SK-N-SH (cell line): ENCODE measurements at regions of chr2 and their contacts with region 1.

Region 1: GRCh38 chr2:25197336-25198208 is 29.2 kb upstream of the POMC start:
- DNase-seq: no peak
- H3K4me3 ChIP-seq: no peak overlapping the region
- H3K27ac ChIP-seq: no peak overlapping the region
- H3K4me1 ChIP-seq: peaks cover 0 to 8% of the 10 kb centered on the region in 2 experiments; a peak in 1 of 4 replicates
- H3K27me3 ChIP-seq: no peaks in the 10 kb centered on the region
- CTCF ChIP-seq: no peak
- EP300 ChIP-seq: no peak
- RAD21 ChIP-seq: no peak

Region 2: GRCh38 chr2:25131567-25132298 is 65.8 kb before region 1 on chr2:
- CTCF ChIA-PET with region 1: interaction called, 35 read pairs
- POLR2A ChIA-PET with region 1: no interaction called
- DNase-seq: no peak
- H3K4me3 ChIP-seq: no peak overlapping the region
- H3K27ac ChIP-seq: no peak overlapping the region
- H3K4me1 ChIP-seq: peaks cover 0 to 3% of the 10 kb centered on the region in 2 experiments; a peak in 1 of 4 replicates
- H3K27me3 ChIP-seq: no peaks in the 10 kb centered on the region
- CTCF ChIP-seq: no peak
- EP300 ChIP-seq: no peak
- RAD21 ChIP-seq: no peak

Region 3: GRCh38 chr2:25159949-25160348 is 37.6 kb before region 1 on chr2:
- CTCF ChIA-PET with region 1: interaction called, 121 read pairs
- POLR2A ChIA-PET with region 1: no interaction called
- DNase-seq: peak; percentile 91
- H3K4me3 ChIP-seq: no peak overlapping the region
- H3K27ac ChIP-seq: no peak overlapping the region
- H3K4me1 ChIP-seq: peaks cover 0 to 12% of the 10 kb centered on the region in 2 experiments; a peak in 1 of 4 replicates
- H3K27me3 ChIP-seq: peaks cover 9% of the 10 kb centered on the region; the same call in 1 of the 2 replicates
- CTCF ChIP-seq: peak; percentile 14; the same call in 1 of the 2 replicates
- EP300 ChIP-seq: no peak
- RAD21 ChIP-seq: no peak

Region 4: DNA sequence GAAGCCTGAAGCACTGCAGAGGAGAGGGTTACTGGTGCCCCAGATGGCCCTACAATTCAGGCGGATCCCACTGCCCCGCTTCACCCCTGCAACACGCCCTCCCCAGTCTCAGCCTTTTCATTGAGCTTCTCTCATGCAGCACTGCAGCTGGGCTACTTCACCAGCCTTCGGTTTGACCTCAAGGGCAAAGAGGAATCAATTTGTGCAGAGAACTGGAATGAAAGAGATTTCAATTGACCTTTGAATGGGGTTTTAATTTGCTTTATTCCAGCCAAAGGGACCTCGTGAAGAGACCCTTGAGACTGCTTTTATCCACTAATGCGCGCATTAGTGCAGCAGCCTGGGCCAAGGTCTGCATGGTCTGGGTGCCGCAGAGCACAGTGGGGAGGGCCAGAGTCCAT is 20.4 kb before region 1 on chr2:
- CTCF ChIA-PET with region 1: interaction called, 29 read pairs
- POLR2A ChIA-PET with region 1: no interaction called
- DNase-seq: peak; percentile 72
- H3K4me3 ChIP-seq: no peak overlapping the region
- H3K27ac ChIP-seq: no peak overlapping the region
- H3K4me1 ChIP-seq: peaks cover 0 to 6% of the 10 kb centered on the region in 2 experiments; a peak in 1 of 4 replicates
- H3K27me3 ChIP-seq: peaks cover 22% of the 10 kb centered on the region
- CTCF ChIP-seq: no peak
- EP300 ChIP-seq: no peak
- RAD21 ChIP-seq: no peak

Region 5: GRCh38 chr2:25215948-25216679 is 18.5 kb after region 1 on chr2:
- CTCF ChIA-PET with region 1: interaction called, 41 read pairs
- POLR2A ChIA-PET with region 1: interaction called, 3 read pairs
- DNase-seq: peak; percentile 35
- H3K4me3 ChIP-seq: no peak overlapping the region
- H3K27ac ChIP-seq: no peak overlapping the region
- H3K4me1 ChIP-seq: peaks cover 0 to 8% of the 10 kb centered on the region in 2 experiments; a peak in 1 of 4 replicates
- H3K27me3 ChIP-seq: no peaks in the 10 kb centered on the region
- CTCF ChIP-seq: no peak
- EP300 ChIP-seq: no peak
- RAD21 ChIP-seq: no peak

Region 6: GRCh38 chr2:25651784-25652455 is 454.3 kb after region 1 on chr2:
- CTCF ChIA-PET with region 1: no interaction called
- POLR2A ChIA-PET with region 1: no interaction called
- DNase-seq: no peak
- H3K4me3 ChIP-seq: no peak overlapping the region
- H3K27ac ChIP-seq: no peak overlapping the region
- H3K4me1 ChIP-seq: peaks cover 0 to 2% of the 10 kb centered on the region in 2 experiments; a peak in 2 of 4 replicates
- H3K27me3 ChIP-seq: no peaks in the 10 kb centered on the region
- CTCF ChIP-seq: no peak
- EP300 ChIP-seq: no peak
- RAD21 ChIP-seq: no peak